CD4-positive, alpha-beta memory T cell (primary cell): ENCODE measurements at regions of chr16 and their contacts with region 1.

Region 1: DNA sequence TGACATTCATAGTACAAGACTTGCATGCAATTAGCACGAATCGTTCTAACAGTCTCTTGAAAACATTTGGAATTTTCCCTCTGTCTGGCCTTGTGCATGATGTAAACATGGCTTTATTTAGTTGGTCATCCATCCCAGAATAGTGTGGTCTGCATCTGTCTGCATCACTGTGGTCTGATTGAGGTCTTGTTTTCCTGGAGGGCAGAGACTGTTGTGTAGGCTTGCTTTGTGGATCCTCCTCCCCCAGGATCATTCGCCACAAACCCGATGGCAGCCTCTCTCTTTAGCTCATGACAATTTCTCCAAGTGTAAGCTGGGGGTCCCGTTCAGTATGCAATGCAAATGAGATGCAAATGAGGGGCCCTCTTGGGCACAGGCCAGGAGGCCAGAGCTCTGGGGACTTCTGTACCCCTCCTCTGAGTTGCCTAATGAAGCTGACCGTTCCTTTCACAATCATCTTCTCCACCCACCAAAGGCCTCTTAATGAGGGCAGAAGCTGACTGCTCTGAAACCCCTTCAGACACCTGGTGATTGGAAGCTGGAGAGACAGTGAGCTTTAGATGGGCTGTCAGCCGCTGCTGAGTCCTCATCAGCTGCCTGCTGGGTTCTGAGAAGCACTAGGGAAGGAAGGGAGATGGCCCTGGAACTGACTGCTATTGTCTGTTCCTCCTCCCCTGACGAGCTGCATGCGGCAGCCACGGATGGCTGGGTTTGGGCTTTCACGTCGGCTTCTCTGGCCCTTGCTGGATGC is 201.2 kb upstream of the CACNG3 start:
- DNase-seq: no peak
- H3K4me3 ChIP-seq: no peak overlapping the region
- H3K4me3 Mint-ChIP-seq: no peak overlapping the region
- H3K27ac ChIP-seq: no peak overlapping the region
- H3K27ac Mint-ChIP-seq: no peak overlapping the region
- H3K4me1 ChIP-seq: peaks cover 2% of the 10 kb centered on the region
- H3K4me1 Mint-ChIP-seq: peaks cover 7 to 44% (median 19%) of the 10 kb centered on the region in 4 donors
- H3K27me3 ChIP-seq: no peaks in the 10 kb centered on the region
- H3K27me3 Mint-ChIP-seq: no peaks in the 10 kb centered on the region

Region 2: GRCh38 chr16:23941963-23942564 is 112.9 kb before region 1 on chr16:
- CTCF ChIA-PET with region 1: no interaction called
- POLR2A ChIA-PET with region 1: no interaction called
- intact Hi-C with region 1: no loop called
- DNase-seq: no peak
- H3K4me3 ChIP-seq: no peak overlapping the region
- H3K4me3 Mint-ChIP-seq: no peak overlapping the region
- H3K27ac ChIP-seq: no peak overlapping the region
- H3K27ac Mint-ChIP-seq: peak overlapping the region in 3 of 7 donors; percentile 8 to 77 (median 64)
- H3K4me1 ChIP-seq: peaks cover 46% of the 10 kb centered on the region
- H3K4me1 Mint-ChIP-seq: peaks cover 44 to 63% (median 59%) of the 10 kb centered on the region in 4 donors
- H3K27me3 ChIP-seq: no peaks in the 10 kb centered on the region
- H3K27me3 Mint-ChIP-seq: no peaks in the 10 kb centered on the region

Region 3: GRCh38 chr16:24041826-24042631 is 12.9 kb before region 1 on chr16:
- CTCF ChIA-PET with region 1: interaction called, 13 read pairs
- POLR2A ChIA-PET with region 1: interaction called, 3 read pairs
- intact Hi-C with region 1: no loop called
- DNase-seq: peak; percentile 68 to 76 (median 73)
- H3K4me3 ChIP-seq: no peak overlapping the region
- H3K4me3 Mint-ChIP-seq: no peak overlapping the region
- H3K27ac ChIP-seq: no peak overlapping the region
- H3K27ac Mint-ChIP-seq: peak overlapping the region in 1 of 7 donors; percentile 24
- H3K4me1 ChIP-seq: no peaks in the 10 kb centered on the region
- H3K4me1 Mint-ChIP-seq: peaks cover 0 to 31% (median 12%) of the 10 kb centered on the region in 4 donors
- H3K27me3 ChIP-seq: no peaks in the 10 kb centered on the region
- H3K27me3 Mint-ChIP-seq: no peaks in the 10 kb centered on the region

Region 4: DNA sequence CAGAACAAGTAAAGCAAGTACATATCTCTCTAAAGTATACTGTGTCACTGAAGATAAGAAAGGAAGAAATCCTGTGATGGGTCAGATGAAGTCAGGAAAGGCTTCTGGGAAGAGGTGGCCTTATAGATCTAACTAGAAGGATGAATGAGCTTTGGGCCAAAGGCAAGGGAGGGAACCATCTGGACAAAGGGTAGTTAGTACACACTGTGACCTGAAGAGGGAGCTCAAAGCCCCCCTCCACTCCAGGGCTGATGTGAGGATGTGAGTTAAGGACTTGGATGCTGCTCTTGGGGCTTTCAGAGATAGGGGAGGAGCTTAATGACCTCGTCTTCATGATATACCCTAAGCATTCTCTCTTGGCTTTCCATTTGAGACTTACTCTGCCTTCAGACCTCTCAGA is 15.9 kb after region 1 on chr16:
- CTCF ChIA-PET with region 1: interaction called, 16 read pairs
- POLR2A ChIA-PET with region 1: no interaction called
- intact Hi-C with region 1: no loop called
- DNase-seq: peak in 3 of 5 donors; percentile 13 to 26 (median 25)
- H3K4me3 ChIP-seq: no peak overlapping the region
- H3K4me3 Mint-ChIP-seq: peak overlapping the region in 1 of 8 donors; percentile 33
- H3K27ac ChIP-seq: no peak overlapping the region
- H3K27ac Mint-ChIP-seq: peak overlapping the region in 6 of 7 donors; percentile 4 to 54 (median 34)
- H3K4me1 ChIP-seq: peaks cover 29% of the 10 kb centered on the region
- H3K4me1 Mint-ChIP-seq: peaks cover 36 to 56% (median 52%) of the 10 kb centered on the region in 4 donors
- H3K27me3 ChIP-seq: no peaks in the 10 kb centered on the region
- H3K27me3 Mint-ChIP-seq: no peaks in the 10 kb centered on the region

Region 5: DNA sequence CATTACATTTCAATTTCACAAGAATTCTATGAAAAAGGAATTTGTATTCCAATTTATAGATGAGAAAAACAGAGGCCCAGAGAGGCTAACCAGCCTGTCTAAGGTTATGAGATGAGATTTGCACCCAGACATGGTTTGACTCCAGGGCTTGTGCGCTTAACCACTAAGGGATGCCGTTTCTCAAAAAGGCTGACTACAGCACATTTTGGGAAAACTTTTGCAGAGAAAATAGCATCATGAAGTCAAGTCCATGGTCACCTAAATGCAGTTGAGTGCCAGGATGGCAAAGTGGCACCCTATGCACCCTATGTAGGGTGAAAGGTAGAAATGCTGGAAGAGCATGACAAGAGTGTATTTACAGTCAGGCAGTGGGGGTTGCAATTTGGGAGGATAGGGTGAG is 57.0 kb after region 1 on chr16:
- CTCF ChIA-PET with region 1: no interaction called
- POLR2A ChIA-PET with region 1: no interaction called
- intact Hi-C with region 1: no loop called
- DNase-seq: no peak
- H3K4me3 ChIP-seq: no peak overlapping the region
- H3K4me3 Mint-ChIP-seq: no peak overlapping the region
- H3K27ac ChIP-seq: no peak overlapping the region
- H3K27ac Mint-ChIP-seq: peak overlapping the region in 2 of 7 donors; percentile 36 to 48
- H3K4me1 ChIP-seq: no peaks in the 10 kb centered on the region
- H3K4me1 Mint-ChIP-seq: peaks cover 0 to 8% (median under 1%) of the 10 kb centered on the region in 4 donors
- H3K27me3 ChIP-seq: no peaks in the 10 kb centered on the region
- H3K27me3 Mint-ChIP-seq: no peaks in the 10 kb centered on the region

Region 6: GRCh38 chr16:25372716-25373115 is 1317.8 kb after region 1 on chr16:
- CTCF ChIA-PET with region 1: no interaction called
- POLR2A ChIA-PET with region 1: no interaction called
- intact Hi-C with region 1: no loop called
- DNase-seq: no peak
- H3K4me3 ChIP-seq: no peak overlapping the region
- H3K4me3 Mint-ChIP-seq: no peak overlapping the region
- H3K27ac ChIP-seq: no peak overlapping the region
- H3K27ac Mint-ChIP-seq: no peak overlapping the region
- H3K4me1 ChIP-seq: no peaks in the 10 kb centered on the region
- H3K4me1 Mint-ChIP-seq: no peaks in the 10 kb centered on the region
- H3K27me3 ChIP-seq: no peaks in the 10 kb centered on the region
- H3K27me3 Mint-ChIP-seq: peaks cover 0 to 6% of the 10 kb centered on the region in 2 donors